ENCODE measurements at regions of chr1 and their contacts with region 1.

Region 1: DNA sequence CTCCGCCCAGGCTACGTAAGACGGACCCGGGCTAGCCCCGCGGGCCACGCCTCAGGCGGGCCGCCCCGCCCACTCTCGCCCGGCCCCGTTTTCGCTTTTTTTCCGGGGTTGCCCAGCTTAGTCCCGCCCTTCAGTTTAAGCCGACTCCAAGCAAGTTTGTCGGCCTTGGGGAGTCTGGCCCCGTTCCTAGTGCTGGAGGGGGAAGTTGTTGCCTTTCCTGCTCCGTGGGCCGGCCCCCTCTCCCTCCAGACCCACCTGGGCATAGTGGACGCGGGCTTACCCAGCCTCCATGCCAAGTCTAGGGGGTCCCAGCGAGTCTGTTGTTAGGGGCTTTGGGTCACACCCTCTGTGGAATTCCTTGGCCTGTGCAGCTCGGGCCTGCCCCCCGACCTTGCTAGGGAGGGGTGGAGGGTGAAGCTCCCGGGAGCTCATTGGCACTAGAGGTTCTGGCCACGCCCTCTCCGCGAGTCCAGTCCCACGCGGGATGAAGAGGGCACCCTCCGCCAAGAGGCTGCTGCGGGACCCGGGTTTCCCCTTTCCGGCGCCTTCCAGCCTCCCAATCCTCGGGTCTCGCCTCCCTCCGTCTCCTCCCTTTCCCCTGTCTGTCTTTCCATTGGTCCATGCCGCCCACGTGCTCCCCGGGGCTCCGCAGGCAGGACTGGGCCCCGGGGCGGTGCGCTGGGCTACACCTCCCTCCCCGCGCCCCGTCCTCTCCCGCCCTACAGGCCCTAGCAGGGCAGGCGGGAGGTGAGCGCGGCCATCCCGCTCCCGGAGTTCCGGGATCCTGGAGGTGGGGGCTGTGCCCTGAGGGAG is 3.3 kb downstream of the RUSC1 start:
- DNase-seq: peak; percentile 96
- ATAC-seq: peak; percentile 84

Region 2: DNA sequence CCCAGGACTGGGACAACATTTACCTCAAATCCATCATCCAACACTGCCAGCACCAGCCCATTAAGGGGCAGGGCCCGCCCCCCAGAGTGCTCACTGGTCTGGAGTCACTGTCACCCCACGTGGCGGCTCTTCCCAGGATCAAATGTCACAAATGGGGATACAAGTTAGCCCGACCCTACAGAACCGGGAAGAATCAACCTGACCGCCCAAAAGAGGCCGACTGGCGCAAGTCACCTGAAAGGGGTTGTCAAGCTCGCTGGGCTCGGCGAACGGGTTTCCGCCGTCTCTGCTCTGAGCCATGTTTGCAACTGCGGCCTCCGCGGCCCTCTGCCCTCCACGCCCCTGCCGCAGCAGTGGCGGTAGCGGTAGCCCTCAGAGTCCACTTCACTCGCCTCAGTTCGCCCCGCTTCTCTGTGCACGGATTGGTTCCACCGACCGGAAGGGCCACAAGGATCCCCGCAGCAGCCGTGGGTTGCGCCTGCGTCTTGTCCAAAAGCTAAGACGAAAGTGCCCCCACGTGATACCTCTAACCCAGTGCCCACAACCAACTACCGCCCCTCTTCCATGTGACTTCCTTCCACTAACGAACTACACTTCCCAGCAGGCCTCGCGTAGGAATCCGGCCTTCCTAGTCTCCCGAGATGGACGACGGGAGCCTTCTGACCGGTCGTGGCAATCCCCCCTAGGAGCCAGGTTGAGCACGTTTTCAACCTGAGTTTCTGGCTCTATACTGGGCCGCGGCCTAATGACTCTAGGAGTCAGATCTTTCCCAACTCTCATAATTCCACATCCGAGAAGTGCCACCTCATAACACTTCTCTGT is 61.9 kb before region 1 on chr1 and contains the start of gene SCAMP3:
- intact Hi-C with region 1: no loop called
- DNase-seq: peak; percentile 94
- ATAC-seq: peak; percentile 97
- total RNA-seq, gene SCAMP3: 62.7 TPM

Region 3: GRCh38 chr1:155277070-155277895 is 46.7 kb before region 1 on chr1 and contains the start of gene HCN3:
- intact Hi-C with region 1: loop called (anchors 10 kb)
- DNase-seq: peak; percentile 99
- ATAC-seq: peak; percentile 86
- total RNA-seq, gene HCN3: 1.5 TPM

Region 4: GRCh38 chr1:155392898-155393411 is 69.0 kb after region 1 on chr1:
- intact Hi-C with region 1: no loop called
- DNase-seq: peak; percentile 35
- ATAC-seq: peak; percentile 60

Measured in left ventricle myocardium superior (tissue), 1 donor.